Lower leg skin (tissue), 4 donors: ENCODE measurements at regions of chr1 and their contacts with region 1.

Region 1: GRCh38 chr1:45762291-45762690 is 11.8 kb upstream of the IPP start:
- DNase-seq: no peak
- H3K4me3 ChIP-seq: no peak overlapping the region
- CTCF ChIP-seq: no peak
- POLR2A ChIP-seq: no peak

Region 2: DNA sequence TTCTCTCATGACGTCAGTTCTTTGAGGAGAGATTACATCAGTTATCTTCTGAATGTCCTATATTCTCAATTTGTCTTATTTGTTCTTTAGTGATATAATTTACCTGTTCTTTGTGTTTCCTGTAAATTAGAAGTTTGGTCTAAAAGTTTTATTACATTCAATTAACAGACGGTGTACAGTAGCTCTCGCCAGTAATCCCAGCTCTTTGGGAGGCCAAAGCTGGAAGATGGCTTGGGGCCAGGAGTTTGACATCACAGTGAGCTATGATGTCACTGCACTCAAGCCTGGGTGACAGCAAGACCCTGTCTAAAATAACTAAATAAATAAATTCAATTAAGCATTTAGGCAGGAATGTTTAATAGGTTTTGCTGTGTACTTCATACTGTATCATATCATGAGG is 13.5 kb after region 1 on chr1:
- intact Hi-C with region 1: loop called (anchors 1 kb)
- DNase-seq: no peak
- H3K4me3 ChIP-seq: no peak overlapping the region
- CTCF ChIP-seq: no peak
- POLR2A ChIP-seq: no peak

Region 3: DNA sequence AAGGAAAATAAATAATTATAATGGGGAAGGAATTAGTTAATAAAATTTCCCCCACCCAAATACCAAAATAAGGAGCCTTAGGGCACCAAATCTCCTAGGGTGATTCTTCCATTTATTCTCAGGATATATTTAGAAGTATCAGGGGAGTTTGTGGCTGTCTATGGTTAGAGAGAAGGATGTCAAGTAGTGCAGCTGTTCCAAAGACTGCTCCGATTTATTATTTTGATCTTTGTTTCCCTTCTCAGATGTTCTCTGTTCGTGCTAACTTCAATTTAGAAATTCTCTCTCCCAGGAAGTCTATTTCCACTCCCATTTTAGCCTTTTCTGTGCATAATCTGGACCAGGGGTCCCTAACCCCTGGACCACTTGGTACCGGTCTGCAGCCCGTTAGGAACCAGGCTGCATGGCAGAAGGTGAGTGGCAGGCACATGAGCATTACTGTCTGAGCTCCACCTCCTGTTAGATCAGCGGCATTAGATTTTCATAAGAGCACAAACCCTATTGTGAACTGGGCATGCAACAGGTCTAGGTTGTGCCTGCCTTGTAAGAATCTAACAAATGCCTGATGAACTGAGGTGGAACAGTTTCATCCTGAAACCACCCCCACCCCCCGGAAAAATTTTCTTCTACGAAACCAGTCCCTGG is 31.8 kb after region 1 on chr1:
- intact Hi-C with region 1: no loop called
- DNase-seq: no peak
- H3K4me3 ChIP-seq: no peak overlapping the region
- CTCF ChIP-seq: no peak
- POLR2A ChIP-seq: no peak

Region 4: DNA sequence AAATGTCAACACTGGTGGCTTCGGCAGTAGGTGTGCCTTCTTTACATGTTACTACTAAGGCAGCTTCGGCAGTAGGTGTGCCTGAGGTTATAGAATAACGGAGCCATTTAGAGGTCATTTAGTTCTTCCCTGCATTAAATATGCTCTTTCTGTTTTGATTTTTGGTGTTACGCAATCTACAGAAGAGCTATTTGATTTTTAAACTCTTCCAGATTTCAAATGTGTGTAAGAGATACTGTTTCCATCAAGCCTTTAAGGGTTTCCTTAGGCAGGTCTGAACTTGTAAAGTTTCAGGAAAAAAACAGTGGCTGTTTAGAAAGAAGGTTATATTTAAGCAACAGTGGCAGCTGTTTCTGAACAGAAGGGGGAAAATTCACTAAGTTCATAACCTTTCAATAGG is 315.4 kb after region 1 on chr1:
- intact Hi-C with region 1: no loop called
- DNase-seq: no peak
- H3K4me3 ChIP-seq: no peak overlapping the region
- CTCF ChIP-seq: no peak
- POLR2A ChIP-seq: no peak